ENCODE measurements at regions of chr11 and their contacts with region 1.

Region 1: DNA sequence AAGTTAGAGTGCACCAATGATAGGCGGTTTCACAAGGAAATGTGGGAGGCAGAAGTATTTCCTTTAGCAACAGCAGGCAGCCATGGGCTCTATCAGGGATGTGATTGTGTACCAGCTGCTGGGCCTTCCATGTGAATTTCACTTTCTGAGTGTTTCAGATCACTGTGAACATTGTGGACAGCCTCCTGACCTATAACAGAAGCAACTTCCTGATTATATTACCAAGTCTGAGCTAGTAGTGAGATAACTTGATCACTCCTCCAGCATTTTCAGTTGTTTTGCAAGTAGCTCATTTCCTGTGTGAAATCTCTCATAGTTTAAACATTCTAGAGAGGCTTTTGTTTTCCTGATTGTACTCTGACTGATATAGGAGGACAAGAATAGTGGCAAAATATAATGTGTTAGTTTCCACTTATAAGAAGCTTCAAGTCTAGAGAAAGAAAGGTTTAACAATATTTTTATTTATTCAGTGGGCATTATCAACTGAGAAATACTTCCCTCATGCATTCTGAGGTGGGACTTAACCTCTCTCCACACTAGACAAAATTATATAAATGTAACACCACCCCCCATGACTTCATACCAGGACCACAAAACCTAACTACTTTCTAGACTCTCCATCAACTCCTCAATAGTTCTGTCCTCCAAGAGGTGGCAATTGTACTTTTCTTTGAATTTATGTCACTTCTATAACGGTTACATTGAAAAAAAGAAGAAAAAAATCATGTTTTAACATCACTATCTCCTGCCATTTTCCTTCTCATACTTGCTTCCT is 184.2 kb upstream of the LUZP2 start:
- DNase-seq: no peak
- ATAC-seq: no peak
- H3K4me3 ChIP-seq: no peak overlapping the region
- H3K4me3 Mint-ChIP-seq: no peak overlapping the region
- H3K27ac ChIP-seq: no peak overlapping the region
- H3K27ac Mint-ChIP-seq: no peak overlapping the region
- H3K4me1 ChIP-seq: no peaks in the 10 kb centered on the region
- H3K4me1 Mint-ChIP-seq: no peaks in the 10 kb centered on the region
- H3K27me3 ChIP-seq: no peaks in the 10 kb centered on the region
- H3K27me3 Mint-ChIP-seq: no peaks in the 10 kb centered on the region
- CTCF ChIP-seq: no peak

Region 2: DNA sequence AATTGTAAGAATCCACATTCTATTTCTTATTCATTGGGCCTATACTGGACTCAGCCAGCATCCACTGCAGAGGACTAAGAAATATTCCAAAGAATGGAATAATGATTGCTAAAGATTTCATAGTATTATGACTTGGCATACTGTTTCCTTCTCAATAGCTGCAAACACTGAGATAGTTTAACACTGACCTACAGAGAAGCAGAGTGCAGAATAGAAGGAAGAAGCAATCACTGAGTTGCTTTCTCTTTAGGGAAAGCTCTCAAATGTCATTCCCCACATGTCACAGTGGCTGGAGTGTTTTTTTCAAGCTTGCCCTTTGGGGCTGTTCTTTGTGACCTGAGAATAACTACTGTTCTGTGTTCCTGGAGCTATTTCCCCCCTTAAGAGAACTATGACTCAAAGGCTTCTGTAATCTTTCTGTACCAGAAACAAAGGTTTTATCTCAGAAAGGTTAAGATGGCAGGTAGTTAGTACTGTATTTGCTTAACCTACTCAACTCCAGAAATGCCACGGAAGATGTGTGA is 59.4 kb before region 1 on chr11:
- CTCF ChIA-PET with region 1: no interaction called
- POLR2A ChIA-PET with region 1: no interaction called
- intact Hi-C with region 1: loop called (anchors 10 kb)
- DNase-seq: no peak
- ATAC-seq: no peak
- H3K4me3 ChIP-seq: no peak overlapping the region
- H3K4me3 Mint-ChIP-seq: no peak overlapping the region
- H3K27ac ChIP-seq: no peak overlapping the region
- H3K27ac Mint-ChIP-seq: no peak overlapping the region
- H3K4me1 ChIP-seq: no peaks in the 10 kb centered on the region
- H3K4me1 Mint-ChIP-seq: no peaks in the 10 kb centered on the region
- H3K27me3 ChIP-seq: no peaks in the 10 kb centered on the region
- H3K27me3 Mint-ChIP-seq: no peaks in the 10 kb centered on the region
- CTCF ChIP-seq: no peak

Region 3: GRCh38 chr11:24386546-24387397 is 74.1 kb after region 1 on chr11:
- CTCF ChIA-PET with region 1: no interaction called
- POLR2A ChIA-PET with region 1: no interaction called
- intact Hi-C with region 1: no loop called
- DNase-seq: no peak
- ATAC-seq: no peak
- H3K4me3 ChIP-seq: no peak overlapping the region
- H3K4me3 Mint-ChIP-seq: no peak overlapping the region
- H3K27ac ChIP-seq: no peak overlapping the region
- H3K27ac Mint-ChIP-seq: no peak overlapping the region
- H3K4me1 ChIP-seq: no peaks in the 10 kb centered on the region
- H3K4me1 Mint-ChIP-seq: no peaks in the 10 kb centered on the region
- H3K27me3 ChIP-seq: no peaks in the 10 kb centered on the region
- H3K27me3 Mint-ChIP-seq: no peaks in the 10 kb centered on the region
- CTCF ChIP-seq: no peak

Measured in B cell (primary cell).